MCF 10A (cell line): ENCODE measurements at regions of chr11 and their contacts with region 1.

Region 1: DNA sequence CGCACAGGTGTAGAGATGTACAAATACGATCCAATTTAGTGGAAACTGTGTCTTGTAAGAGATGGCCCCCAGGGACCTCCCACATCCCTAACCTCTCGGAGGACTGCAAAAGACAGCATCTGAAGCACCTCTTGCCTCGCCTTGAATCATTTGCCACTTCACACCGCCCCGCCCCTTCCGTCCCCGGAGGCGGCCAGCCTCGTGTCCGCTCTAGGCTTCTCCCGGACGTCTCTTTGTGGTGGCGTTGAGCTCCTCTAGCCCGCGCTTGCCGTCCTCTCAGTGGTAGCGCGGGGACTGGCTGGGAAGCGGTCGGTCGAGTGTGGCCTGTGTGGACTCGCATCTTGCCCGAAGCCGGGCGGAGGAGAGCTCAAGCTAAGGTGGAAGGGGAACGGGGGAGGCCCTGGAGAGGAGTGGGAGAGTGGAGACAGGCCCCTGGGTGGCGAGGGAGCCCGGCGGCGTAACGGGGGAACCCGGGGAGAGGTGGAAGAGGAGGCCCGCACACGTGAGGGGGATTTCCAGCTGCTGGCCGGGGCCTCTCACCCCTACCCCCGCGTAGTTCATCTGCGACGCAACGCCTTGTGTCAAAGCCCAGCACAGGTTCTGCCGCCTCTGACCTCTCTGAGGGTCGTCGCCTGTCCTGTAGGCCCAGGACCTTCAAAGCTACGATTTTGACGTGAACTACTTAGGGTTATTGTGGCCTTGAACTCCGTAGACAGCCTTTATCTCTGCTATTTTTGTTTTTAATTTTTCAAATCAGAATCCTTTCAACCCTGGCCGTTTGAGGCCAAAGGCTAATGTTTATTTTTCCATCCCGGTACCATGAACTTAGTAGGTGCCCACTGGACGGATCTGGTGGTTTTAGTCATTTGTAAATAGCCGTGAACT is at the start of gene ARL14EP:
- DNase-seq: peak; percentile 95
- H3K4me3 Mint-ChIP-seq: peak within 1 kb of the TSS; percentile 96
- H3K27ac Mint-ChIP-seq: peak within 1 kb of the TSS; percentile 99
- H3K4me1 Mint-ChIP-seq: peaks cover 30% of the 10 kb centered on the region
- H3K27me3 Mint-ChIP-seq: peaks cover 21% of the 10 kb centered on the region
- CTCF ChIP-seq: no peak
- total RNA-seq, gene ARL14EP: 25.1 and 28.4 TPM in 2 replicates

Region 2: DNA sequence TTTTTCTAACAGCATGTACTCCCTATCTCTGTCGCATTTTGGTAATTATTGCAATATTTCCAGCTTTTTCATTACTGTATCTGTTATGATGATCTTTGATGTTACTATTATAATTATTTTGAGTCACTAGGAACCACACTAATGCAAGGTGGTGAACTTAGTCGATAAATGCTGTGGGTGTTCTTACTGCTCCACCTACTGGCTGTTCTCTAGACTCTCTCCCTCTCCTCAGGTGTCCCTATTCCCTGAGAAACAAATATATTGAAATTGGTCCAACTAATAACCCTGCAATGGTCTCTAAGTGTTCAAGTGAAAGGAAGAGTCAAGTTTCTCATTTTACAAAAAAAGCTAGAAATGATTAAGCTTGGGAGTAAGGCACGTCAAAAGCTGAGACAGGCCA is 10.3 kb after region 1 on chr11:
- CTCF ChIA-PET with region 1: interaction called, 29 read pairs
- POLR2A ChIA-PET with region 1: interaction called, 17 read pairs
- intact Hi-C with region 1: no loop called
- DNase-seq: peak; percentile 25
- H3K4me3 Mint-ChIP-seq: no peak overlapping the region
- H3K27ac Mint-ChIP-seq: no peak overlapping the region
- H3K4me1 Mint-ChIP-seq: peaks cover 10% of the 10 kb centered on the region
- H3K27me3 Mint-ChIP-seq: no peaks in the 10 kb centered on the region
- CTCF ChIP-seq: peak; percentile 34